HepG2 (cell line): ENCODE measurements at regions of chr15 and their contacts with region 1.

Region 1: DNA sequence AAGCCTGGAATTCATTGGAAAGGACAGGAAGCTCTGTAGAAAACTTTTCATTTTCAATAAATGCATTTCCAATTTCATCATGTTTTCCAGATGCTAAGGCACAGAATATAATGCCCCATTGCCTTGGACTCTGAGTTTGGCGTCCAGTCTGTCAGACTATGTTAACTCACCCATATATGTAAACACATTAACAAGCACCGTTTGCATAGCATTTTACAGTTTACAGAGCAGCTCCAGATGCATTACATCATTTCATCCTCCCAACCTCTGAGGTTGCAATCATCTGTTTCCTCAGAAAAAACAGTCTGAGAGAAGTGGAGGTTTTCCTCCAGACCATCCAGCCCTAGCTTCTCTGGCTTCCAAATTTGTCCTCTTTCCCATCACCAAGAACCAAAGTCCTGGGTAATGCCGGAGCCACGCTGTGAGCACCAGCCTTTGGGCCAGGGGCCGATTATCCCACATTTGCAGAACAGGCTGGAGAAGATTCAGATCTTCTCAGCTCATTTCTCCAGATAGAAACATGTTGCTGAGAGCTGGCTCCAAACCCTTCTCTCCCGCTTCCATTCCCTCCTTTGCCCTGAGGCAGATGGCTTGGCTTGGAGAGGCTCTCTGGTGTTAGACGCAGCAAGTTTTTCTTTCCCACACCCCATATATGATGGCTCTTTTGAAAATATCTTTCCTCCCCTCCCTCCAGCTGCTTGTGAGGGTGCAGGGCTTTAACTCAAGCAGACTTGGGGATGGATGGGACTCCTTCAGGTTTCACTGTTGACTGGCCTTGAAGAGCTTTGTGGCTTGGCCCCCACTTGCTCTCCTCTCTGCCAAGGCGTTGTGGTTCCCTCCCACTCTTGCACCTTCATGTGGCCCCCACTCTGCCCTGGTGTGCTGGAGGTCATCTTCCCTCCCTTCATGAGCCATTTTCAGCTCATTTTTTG is 26.0 kb downstream of the CYP19A1 start:
- DNase-seq: peak; percentile 89
- ATAC-seq: peak; percentile 70
- H3K4me3 ChIP-seq: peak overlapping the region; percentile 14 to 50 (median 14); a peak in 3 of 6 replicates
- H3K27ac ChIP-seq: peak overlapping the region; percentile 91
- H3K4me1 ChIP-seq: peaks cover 82% of the 10 kb centered on the region
- H3K27me3 ChIP-seq: no peaks in the 10 kb centered on the region
- CTCF ChIP-seq: no peak
- EP300 ChIP-seq: peak in 1 of 2 experiments; percentile 81; a peak in 3 of 4 replicates
- POLR2A ChIP-seq: no peak
- RAD21 ChIP-seq: no peak

Region 2: DNA sequence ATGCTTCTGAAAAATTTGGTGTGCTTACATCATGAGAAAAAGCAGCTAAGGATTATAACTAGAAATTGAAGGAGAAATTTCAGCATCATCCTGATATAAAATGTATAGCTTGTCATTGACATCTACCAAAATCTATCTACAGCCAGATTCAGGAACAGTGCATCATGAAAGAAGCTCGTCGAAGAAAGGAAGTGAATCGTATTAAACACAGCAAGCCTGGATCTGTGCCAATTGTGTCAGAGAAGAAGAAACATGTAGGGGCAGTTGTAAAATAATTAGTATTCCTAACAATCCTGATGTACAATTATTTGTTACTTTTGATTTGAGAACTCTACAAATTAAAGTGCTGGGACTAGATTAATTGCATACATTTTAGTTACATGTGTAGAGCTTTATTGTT is 366.7 kb before region 1 on chr15:
- CTCF ChIA-PET with region 1: no interaction called
- POLR2A ChIA-PET with region 1: no interaction called
- in situ Hi-C with region 1: no loop called
- intact Hi-C with region 1: no loop called
- DNase-seq: no peak
- ATAC-seq: no peak
- H3K4me3 ChIP-seq: no peak overlapping the region
- H3K27ac ChIP-seq: no peak overlapping the region
- H3K4me1 ChIP-seq: no peaks in the 10 kb centered on the region
- H3K27me3 ChIP-seq: no peaks in the 10 kb centered on the region
- CTCF ChIP-seq: no peak
- EP300 ChIP-seq: no peak
- POLR2A ChIP-seq: no peak
- RAD21 ChIP-seq: no peak

Region 3: DNA sequence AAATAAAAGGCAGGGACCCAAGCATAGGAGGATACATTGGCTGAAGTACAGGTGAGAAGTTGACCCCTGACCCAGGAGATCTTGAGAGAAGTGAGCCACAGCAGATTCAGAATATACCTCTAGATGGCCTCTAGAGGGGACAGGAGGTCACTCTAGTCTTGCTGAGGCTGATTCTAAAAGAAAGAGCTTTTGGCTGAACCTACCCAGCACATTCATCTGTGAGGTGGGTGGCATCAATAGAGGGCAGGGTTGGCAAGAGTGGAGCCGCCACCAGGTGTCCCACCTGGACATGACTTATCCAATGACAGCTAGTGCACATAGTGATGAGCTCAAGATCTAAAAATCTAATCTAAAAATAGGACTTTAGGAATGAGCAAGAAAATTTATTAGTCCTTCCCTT is 25.6 kb before region 1 on chr15:
- CTCF ChIA-PET with region 1: no interaction called
- POLR2A ChIA-PET with region 1: interaction called, 3 read pairs
- in situ Hi-C with region 1: no loop called
- intact Hi-C with region 1: loop called (anchors 1 kb)
- DNase-seq: peak; percentile 15
- ATAC-seq: peak; percentile 33; the same call in 2 of the 3 replicates
- H3K4me3 ChIP-seq: no peak overlapping the region
- H3K27ac ChIP-seq: no peak overlapping the region
- H3K4me1 ChIP-seq: peaks cover 53% of the 10 kb centered on the region
- H3K27me3 ChIP-seq: no peaks in the 10 kb centered on the region
- CTCF ChIP-seq: peak; percentile 44
- EP300 ChIP-seq: no peak
- POLR2A ChIP-seq: no peak
- RAD21 ChIP-seq: peak; percentile 39; the same call in 1 of the 2 replicates

Region 4: GRCh38 chr15:51299187-51300066 is 13.0 kb before region 1 on chr15:
- CTCF ChIA-PET with region 1: no interaction called
- POLR2A ChIA-PET with region 1: interaction called, 19 read pairs
- in situ Hi-C with region 1: no loop called
- intact Hi-C with region 1: loop called (anchors 1 kb)
- DNase-seq: peak; percentile 87
- ATAC-seq: peak; percentile 91
- H3K4me3 ChIP-seq: peak overlapping the region in 1 of 3 experiments; percentile 34; a peak in 1 of 6 replicates
- H3K27ac ChIP-seq: peak overlapping the region; percentile 63
- H3K4me1 ChIP-seq: peaks cover 48% of the 10 kb centered on the region
- H3K27me3 ChIP-seq: no peaks in the 10 kb centered on the region; a peak in 1 of 5 replicates
- CTCF ChIP-seq: peak; percentile 64
- EP300 ChIP-seq: no peak
- POLR2A ChIP-seq: 0 out of 4 replicates have a peak, but pooled peaks of 1 of the 2 experiments have one; percentile 33
- RAD21 ChIP-seq: peak; percentile 6; the same call in 1 of the 2 replicates

Region 5: GRCh38 chr15:51438526-51438925 is 126.1 kb after region 1 on chr15:
- CTCF ChIA-PET with region 1: no interaction called
- POLR2A ChIA-PET with region 1: no interaction called
- in situ Hi-C with region 1: no loop called
- intact Hi-C with region 1: no loop called
- DNase-seq: no peak
- ATAC-seq: no peak
- H3K4me3 ChIP-seq: no peak overlapping the region
- H3K27ac ChIP-seq: no peak overlapping the region
- H3K4me1 ChIP-seq: peaks cover 5% of the 10 kb centered on the region
- H3K27me3 ChIP-seq: no peaks in the 10 kb centered on the region
- CTCF ChIP-seq: no peak
- EP300 ChIP-seq: no peak
- POLR2A ChIP-seq: no peak
- RAD21 ChIP-seq: no peak